GM12878 (cell line): ENCODE measurements at regions of chr14 and their contacts with region 1.

Region 1: GRCh38 chr14:20613094-20614037 is 22.2 kb upstream of the RNASE12 start:
- DNase-seq: peak; percentile 98
- ATAC-seq: peak; percentile 76
- H3K4me3 ChIP-seq: peak overlapping the region; percentile 89
- H3K27ac ChIP-seq: peak overlapping the region; percentile 54; the same call in 1 of the 2 replicates
- H3K4me1 ChIP-seq: peaks cover 42% of the 10 kb centered on the region
- H3K27me3 ChIP-seq: no peaks in the 10 kb centered on the region
- CTCF ChIP-seq: peak; percentile 49 to 62 (median 56); a peak in 5 of 6 replicates
- EP300 ChIP-seq: no peak; a peak in 1 of 4 replicates
- POLR2A ChIP-seq: no peak
- RAD21 ChIP-seq: 0 out of 2 replicates have a peak, but pooled peaks have one; percentile 7

Region 2: DNA sequence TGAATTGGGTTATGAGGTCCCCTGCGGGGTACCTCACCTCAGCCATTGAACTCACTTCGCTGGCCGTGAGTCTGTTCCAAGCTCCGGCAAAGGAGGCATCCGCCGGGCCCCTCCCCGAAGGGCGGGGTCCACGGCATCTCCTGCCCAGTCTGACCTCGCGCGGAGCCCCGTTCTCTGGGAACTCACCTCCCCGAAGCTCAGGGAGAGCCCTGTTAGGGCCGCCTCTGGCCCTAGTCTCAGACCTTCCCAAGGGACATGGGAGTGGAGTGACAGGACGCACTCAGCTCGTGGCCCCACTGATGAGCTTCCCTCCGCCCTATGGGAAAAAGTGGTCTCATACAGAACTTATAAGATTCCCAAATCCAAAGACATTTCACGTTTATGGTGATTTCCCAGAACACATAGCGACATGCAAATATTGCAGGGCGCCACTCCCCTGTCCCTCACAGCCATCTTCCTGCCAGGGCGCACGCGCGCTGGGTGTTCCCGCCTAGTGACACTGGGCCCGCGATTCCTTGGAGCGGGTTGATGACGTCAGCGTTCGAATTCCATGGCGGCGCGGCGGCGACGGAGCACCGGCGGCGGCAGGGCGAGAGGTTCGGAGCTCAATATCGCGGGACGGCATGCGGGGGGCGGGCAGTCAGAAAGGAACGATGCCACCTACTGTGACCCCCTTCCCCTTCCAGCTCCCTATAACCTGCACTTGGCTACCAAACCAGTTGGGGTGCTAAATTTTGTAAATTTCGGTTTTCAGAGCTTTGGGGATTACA is 270.1 kb before region 1 on chr14 and contains the start of gene PARP2:
- CTCF ChIA-PET with region 1: interaction called, 5 read pairs
- POLR2A ChIA-PET with region 1: interaction called, 4 read pairs
- RAD21 ChIA-PET with region 1: interaction called, 28 read pairs
- SMC1A ChIA-PET with region 1: interaction called, 8 read pairs
- in situ Hi-C with region 1: no loop called
- intact Hi-C with region 1: loop called (anchors 5 kb)
- DNase-seq: peak; percentile 99
- ATAC-seq: peak; percentile 96
- H3K4me3 ChIP-seq: peak within 1 kb of the TSS; percentile 81
- H3K27ac ChIP-seq: peak within 1 kb of the TSS; percentile 89
- H3K4me1 ChIP-seq: no peaks in the 10 kb centered on the region
- H3K27me3 ChIP-seq: no peaks in the 10 kb centered on the region
- CTCF ChIP-seq: no peak
- EP300 ChIP-seq: no peak
- POLR2A ChIP-seq: peak; percentile 97
- RAD21 ChIP-seq: no peak
- polyA plus RNA-seq, gene PARP2: 30.4 to 38.0 TPM

Region 3: GRCh38 chr14:20489093-20489994 is 124.0 kb before region 1 on chr14:
- CTCF ChIA-PET with region 1: interaction called, 42 read pairs
- POLR2A ChIA-PET with region 1: no interaction called
- RAD21 ChIA-PET with region 1: interaction called, 13 read pairs
- SMC1A ChIA-PET with region 1: interaction called, 27 read pairs
- in situ Hi-C with region 1: no loop called
- intact Hi-C with region 1: loop called (anchors 2 kb)
- DNase-seq: peak; percentile 72
- ATAC-seq: peak; percentile 36
- H3K4me3 ChIP-seq: peak overlapping the region; percentile 41
- H3K27ac ChIP-seq: peak overlapping the region; percentile 1; the same call in 1 of the 2 replicates
- H3K4me1 ChIP-seq: peaks cover 35% of the 10 kb centered on the region
- H3K27me3 ChIP-seq: no peaks in the 10 kb centered on the region
- CTCF ChIP-seq: no peak
- EP300 ChIP-seq: no peak
- POLR2A ChIP-seq: no peak
- RAD21 ChIP-seq: no peak

Region 4: GRCh38 chr14:20624495-20625070 is 11.2 kb after region 1 on chr14:
- CTCF ChIA-PET with region 1: interaction called, 19 read pairs
- POLR2A ChIA-PET with region 1: no interaction called
- RAD21 ChIA-PET with region 1: interaction called, 17 read pairs
- SMC1A ChIA-PET with region 1: interaction called, 9 read pairs
- in situ Hi-C with region 1: no loop called
- intact Hi-C with region 1: loop called (anchors 1 kb)
- DNase-seq: no peak
- ATAC-seq: peak; percentile 70
- H3K4me3 ChIP-seq: peak overlapping the region; percentile 72
- H3K27ac ChIP-seq: no peak overlapping the region
- H3K4me1 ChIP-seq: peaks cover 24% of the 10 kb centered on the region
- H3K27me3 ChIP-seq: peaks cover 0 to 2% of the 10 kb centered on the region in 2 experiments; a peak in 2 of 4 replicates
- CTCF ChIP-seq: no peak
- EP300 ChIP-seq: no peak
- POLR2A ChIP-seq: no peak
- RAD21 ChIP-seq: no peak

Region 5: DNA sequence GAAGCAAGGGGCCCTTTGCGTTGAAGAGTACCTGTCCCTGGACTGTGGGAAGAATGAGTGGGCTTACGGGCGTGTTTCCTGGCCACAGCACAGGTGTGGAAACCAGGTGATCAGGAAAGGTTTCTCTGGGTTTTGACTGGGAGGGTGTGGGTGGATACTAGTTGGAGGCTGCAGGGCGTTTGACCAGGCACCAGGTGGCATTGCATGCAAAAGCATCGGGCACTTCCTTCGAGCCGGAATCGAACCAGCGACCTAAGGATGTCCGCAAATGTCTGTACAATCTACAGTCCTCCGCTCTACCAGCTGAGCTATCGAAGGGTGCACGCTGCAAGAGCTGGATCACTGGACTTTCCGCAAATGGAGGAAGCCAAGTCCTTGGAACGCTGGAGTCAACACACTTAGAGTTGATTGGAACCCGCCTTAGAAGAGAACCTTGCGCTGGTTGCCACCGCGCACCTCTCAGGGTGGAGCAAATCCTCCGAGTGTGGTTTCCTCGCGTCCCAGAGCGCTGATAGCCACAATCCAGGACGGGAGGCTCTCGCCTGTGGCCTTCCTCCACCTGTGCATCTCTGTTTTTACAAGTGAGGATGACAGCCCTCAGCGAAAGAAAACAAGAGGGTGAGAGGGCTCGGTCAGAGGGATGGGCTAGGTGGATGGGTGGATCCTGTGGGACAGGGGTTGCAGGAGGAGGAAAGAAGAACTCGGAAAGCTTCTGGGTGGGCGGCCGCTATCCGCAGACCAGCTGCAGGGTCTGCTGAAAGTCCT is 49.8 kb after region 1 on chr14:
- CTCF ChIA-PET with region 1: interaction called, 17 read pairs
- POLR2A ChIA-PET with region 1: interaction called, 9 read pairs
- RAD21 ChIA-PET with region 1: interaction called, 12 read pairs
- SMC1A ChIA-PET with region 1: interaction called, 14 read pairs
- in situ Hi-C with region 1: no loop called
- intact Hi-C with region 1: loop called (anchors 5 kb)
- DNase-seq: peak; percentile 88
- ATAC-seq: peak; percentile 73
- H3K4me3 ChIP-seq: peak overlapping the region; percentile 83
- H3K27ac ChIP-seq: peak overlapping the region; percentile 20; the same call in 1 of the 2 replicates
- H3K4me1 ChIP-seq: peaks cover 20% of the 10 kb centered on the region
- H3K27me3 ChIP-seq: no peaks in the 10 kb centered on the region
- CTCF ChIP-seq: peak; percentile 72 to 84 (median 77)
- EP300 ChIP-seq: peak in 1 of 2 experiments; percentile 45; a peak in 1 of 4 replicates
- POLR2A ChIP-seq: 0 out of 2 replicates have a peak, but pooled peaks have one; percentile 32
- RAD21 ChIP-seq: peak; percentile 75

Region 6: DNA sequence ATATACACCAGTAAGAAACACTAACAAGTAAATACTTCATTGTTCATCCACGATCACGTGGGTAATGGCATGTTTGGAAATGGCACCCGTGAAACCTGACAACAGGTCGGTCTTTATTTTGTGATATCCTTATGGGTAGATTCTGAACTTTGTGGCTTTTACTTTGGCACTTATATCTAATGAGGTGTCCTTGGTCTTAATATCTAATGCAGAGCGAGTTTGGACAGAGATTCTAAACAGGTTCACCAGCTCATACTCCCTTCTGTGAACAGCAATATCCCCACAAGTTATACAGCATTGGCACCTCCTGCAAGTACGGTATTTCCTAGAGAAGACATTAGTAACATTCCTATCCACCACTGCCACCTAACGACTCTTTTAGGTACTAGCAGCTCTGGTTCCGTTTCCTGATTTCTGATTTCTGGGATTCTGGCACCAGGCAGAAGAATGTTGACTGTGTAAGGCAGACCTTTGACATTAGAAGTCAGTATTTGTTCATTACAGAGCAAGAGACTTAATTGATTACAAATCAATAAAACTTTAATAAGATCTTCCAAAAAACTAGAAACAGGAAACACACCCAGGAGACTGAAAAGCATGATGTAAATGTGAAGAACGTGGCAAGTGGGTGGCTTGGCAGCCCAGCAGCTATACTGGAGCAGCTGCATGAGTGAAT is 77.6 kb after region 1 on chr14:
- CTCF ChIA-PET with region 1: interaction called, 163 read pairs
- POLR2A ChIA-PET with region 1: interaction called, 6 read pairs
- RAD21 ChIA-PET with region 1: interaction called, 43 read pairs
- SMC1A ChIA-PET with region 1: interaction called, 55 read pairs
- in situ Hi-C with region 1: no loop called
- intact Hi-C with region 1: loop called (anchors 1 kb)
- DNase-seq: peak; percentile 44
- ATAC-seq: peak; percentile 95
- H3K4me3 ChIP-seq: no peak overlapping the region
- H3K27ac ChIP-seq: no peak overlapping the region
- H3K4me1 ChIP-seq: no peaks in the 10 kb centered on the region
- H3K27me3 ChIP-seq: no peaks in the 10 kb centered on the region
- CTCF ChIP-seq: peak; percentile 80 to 94 (median 82)
- EP300 ChIP-seq: no peak
- POLR2A ChIP-seq: no peak
- RAD21 ChIP-seq: peak; percentile 94

Region 7: DNA sequence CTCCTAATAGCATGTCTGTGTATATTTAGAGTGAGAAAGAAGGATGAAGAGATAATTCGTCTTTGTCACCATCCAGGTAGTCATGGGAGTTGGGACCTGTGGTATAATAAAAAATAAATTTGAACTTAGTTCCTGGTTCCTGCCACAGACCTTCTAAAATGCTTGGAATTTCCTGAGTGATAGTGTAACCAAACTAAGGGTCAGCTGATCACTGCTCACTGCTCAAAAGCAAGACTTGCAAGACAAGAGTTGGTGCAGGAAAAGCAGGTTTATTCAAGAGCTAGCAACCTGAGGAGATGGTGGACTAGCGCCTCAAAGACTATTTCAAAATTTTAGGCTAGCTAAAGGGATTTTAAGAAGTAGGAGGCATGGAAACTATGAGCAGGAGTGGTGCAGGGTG is 94.3 kb after region 1 on chr14:
- CTCF ChIA-PET with region 1: no interaction called
- POLR2A ChIA-PET with region 1: no interaction called
- RAD21 ChIA-PET with region 1: no interaction called
- SMC1A ChIA-PET with region 1: no interaction called
- in situ Hi-C with region 1: no loop called
- intact Hi-C with region 1: no loop called
- DNase-seq: no peak
- ATAC-seq: no peak
- H3K4me3 ChIP-seq: no peak overlapping the region
- H3K27ac ChIP-seq: no peak overlapping the region
- H3K4me1 ChIP-seq: no peaks in the 10 kb centered on the region
- H3K27me3 ChIP-seq: no peaks in the 10 kb centered on the region
- CTCF ChIP-seq: no peak
- EP300 ChIP-seq: no peak
- POLR2A ChIP-seq: no peak
- RAD21 ChIP-seq: no peak